Activated B cell treated with CpG ODN at 0.5 μM for 24 hours (primary cell): ENCODE measurements at regions of chr18 and their contacts with region 1.

Region 1: DNA sequence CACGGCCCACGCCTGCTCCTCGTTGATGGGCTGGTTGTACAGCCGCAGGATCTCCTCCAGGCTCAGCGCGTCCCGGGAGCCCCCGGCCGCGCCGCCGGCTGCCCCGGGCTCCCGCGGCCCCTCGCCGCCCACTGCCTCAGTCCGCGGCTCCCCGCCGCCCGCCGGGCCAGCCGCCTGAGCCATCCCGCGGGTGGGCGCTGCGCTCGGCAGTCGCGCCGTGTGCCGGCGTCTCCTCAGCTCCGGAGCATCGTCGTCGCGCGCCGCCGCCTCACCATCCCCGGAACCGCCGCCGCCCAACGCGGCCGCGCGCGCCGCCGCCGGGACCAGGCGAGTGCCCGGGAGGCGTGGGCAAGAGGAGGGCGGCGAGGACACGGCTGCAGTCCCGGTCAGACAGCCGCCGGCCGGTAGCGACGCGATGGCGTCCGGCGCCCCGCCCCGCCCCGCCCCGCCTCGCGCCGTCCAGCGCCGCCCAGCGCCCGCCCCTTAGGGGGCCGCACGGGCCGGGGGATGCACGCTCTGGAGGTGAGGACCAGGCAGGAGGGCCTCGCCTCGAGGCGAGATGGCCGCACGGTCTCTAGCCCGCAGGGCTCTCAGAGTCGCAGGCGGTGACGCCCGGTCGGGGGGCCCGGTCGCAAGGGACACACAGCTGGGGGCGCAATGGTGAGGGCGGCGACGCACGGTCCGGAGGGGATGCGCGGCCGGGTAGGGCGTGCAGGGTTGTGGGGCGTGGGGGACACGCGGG is at the start of gene SPIRE1:
- DNase-seq: peak; percentile 52
- ATAC-seq: peak; percentile 74
- H3K4me3 Mint-ChIP-seq: peak within 1 kb of the TSS; percentile 86
- H3K27ac Mint-ChIP-seq: peak within 1 kb of the TSS; percentile 69
- H3K4me1 Mint-ChIP-seq: peaks cover 10% of the 10 kb centered on the region
- H3K27me3 Mint-ChIP-seq: peaks cover 28% of the 10 kb centered on the region
- CTCF ChIP-seq: no peak
- total RNA-seq, gene SPIRE1: 2.5 and 2.9 TPM in 2 replicates

Region 2: DNA sequence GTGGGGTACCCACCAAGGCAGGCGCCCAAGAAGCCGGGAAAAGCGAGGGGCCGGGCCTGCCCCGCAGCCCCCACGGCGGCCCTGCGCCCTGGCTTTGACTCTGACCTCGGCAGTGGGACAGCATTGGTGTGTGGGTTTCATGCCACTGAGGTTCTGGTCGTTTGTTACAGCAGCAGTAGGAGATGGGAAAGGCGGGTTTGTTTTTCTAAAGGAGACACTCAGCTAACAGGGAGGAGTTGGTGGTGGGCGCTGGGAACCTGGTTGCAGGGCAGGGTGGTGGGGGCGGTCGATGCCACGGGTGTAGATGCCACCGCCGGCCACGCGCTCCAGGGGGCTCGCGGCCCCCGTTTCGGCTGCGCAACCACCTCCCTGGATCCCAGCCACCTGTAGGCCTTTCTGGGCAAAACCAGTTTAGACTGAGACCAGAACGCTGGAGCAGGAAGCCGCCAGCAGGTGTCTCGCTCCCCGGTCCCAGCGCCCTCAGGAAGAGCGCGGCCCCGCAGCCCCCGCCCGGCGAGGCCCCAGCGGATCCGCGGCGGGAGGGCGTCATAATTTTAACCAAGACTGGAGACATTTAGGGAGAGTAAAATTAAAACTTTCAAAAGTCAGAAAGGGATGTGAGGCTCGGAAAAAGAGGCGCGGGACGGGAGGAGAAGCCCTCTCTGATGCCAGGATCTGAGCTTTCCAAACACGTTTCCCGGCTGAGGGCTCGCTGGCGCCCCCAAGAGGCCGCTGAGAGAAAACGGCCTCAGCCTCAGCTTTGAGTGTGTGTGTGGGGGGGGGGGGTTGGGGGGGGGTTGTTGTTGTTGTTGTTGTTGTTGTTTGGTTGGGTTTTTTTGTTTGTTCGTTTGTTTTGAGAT is 386.2 kb before region 1 on chr18:
- CTCF ChIA-PET with region 1: no interaction called
- POLR2A ChIA-PET with region 1: no interaction called
- intact Hi-C with region 1: loop called (anchors 2 kb)
- DNase-seq: peak; percentile 50
- ATAC-seq: peak; percentile 82
- H3K4me3 Mint-ChIP-seq: peak overlapping the region; percentile 73
- H3K27ac Mint-ChIP-seq: no peak overlapping the region
- H3K4me1 Mint-ChIP-seq: peaks cover 2% of the 10 kb centered on the region
- H3K27me3 Mint-ChIP-seq: peaks cover 13% of the 10 kb centered on the region
- CTCF ChIP-seq: no peak

Region 3: GRCh38 chr18:12317664-12318333 is 340.1 kb before region 1 on chr18:
- CTCF ChIA-PET with region 1: no interaction called
- POLR2A ChIA-PET with region 1: no interaction called
- intact Hi-C with region 1: loop called (anchors 2 kb)
- DNase-seq: no peak
- ATAC-seq: peak; percentile 25
- H3K4me3 Mint-ChIP-seq: peak overlapping the region; percentile 37
- H3K27ac Mint-ChIP-seq: peak overlapping the region; percentile 61
- H3K4me1 Mint-ChIP-seq: peaks cover 72% of the 10 kb centered on the region
- H3K27me3 Mint-ChIP-seq: no peaks in the 10 kb centered on the region
- CTCF ChIP-seq: no peak

Region 4: GRCh38 chr18:12327510-12328178 is 330.2 kb before region 1 on chr18:
- CTCF ChIA-PET with region 1: interaction called, 8 read pairs
- POLR2A ChIA-PET with region 1: no interaction called
- intact Hi-C with region 1: loop called (anchors 1 kb)
- DNase-seq: peak; percentile 49
- ATAC-seq: peak; percentile 52
- H3K4me3 Mint-ChIP-seq: no peak overlapping the region
- H3K27ac Mint-ChIP-seq: no peak overlapping the region
- H3K4me1 Mint-ChIP-seq: peaks cover 13% of the 10 kb centered on the region
- H3K27me3 Mint-ChIP-seq: no peaks in the 10 kb centered on the region
- CTCF ChIP-seq: no peak

Region 5: DNA sequence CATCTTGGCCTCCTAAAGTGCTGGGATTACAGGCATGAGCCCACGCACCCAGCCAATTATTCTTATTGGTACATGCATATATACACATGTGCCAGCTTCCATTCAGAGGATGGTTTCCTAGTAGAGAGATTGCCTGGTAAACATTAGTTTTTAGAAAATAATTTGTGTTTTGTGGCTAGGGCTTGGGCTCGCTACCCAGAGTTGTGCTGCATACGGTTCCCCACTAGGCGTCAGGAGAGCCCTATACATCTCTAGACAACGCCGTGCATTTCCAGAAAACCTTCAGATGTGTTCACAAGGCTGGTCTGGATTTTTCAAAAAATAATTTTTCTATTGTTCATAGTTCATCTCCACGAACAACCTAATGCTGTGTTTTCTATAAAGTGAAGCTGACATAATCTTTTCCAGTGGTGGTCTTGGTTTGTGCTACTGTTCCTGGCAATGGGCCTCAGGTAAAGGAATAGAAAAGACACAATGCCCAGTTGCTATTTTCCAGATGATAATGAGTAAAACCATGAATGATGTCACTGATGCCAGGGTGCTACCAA is 266.2 kb before region 1 on chr18:
- CTCF ChIA-PET with region 1: interaction called, 49 read pairs
- POLR2A ChIA-PET with region 1: no interaction called
- intact Hi-C with region 1: loop called (anchors 1 kb)
- DNase-seq: no peak
- ATAC-seq: peak; percentile 98
- H3K4me3 Mint-ChIP-seq: no peak overlapping the region
- H3K27ac Mint-ChIP-seq: no peak overlapping the region
- H3K4me1 Mint-ChIP-seq: no peaks in the 10 kb centered on the region
- H3K27me3 Mint-ChIP-seq: peaks cover 13% of the 10 kb centered on the region
- CTCF ChIP-seq: no peak

Region 6: GRCh38 chr18:12408247-12408869 is 249.5 kb before region 1 on chr18:
- CTCF ChIA-PET with region 1: no interaction called
- POLR2A ChIA-PET with region 1: no interaction called
- intact Hi-C with region 1: loop called (anchors 1 kb)
- DNase-seq: no peak
- ATAC-seq: peak; percentile 8
- H3K4me3 Mint-ChIP-seq: peak overlapping the region; percentile 76
- H3K27ac Mint-ChIP-seq: peak overlapping the region; percentile 68
- H3K4me1 Mint-ChIP-seq: peaks cover 18% of the 10 kb centered on the region
- H3K27me3 Mint-ChIP-seq: peaks cover 7% of the 10 kb centered on the region
- CTCF ChIP-seq: no peak

Region 7: DNA sequence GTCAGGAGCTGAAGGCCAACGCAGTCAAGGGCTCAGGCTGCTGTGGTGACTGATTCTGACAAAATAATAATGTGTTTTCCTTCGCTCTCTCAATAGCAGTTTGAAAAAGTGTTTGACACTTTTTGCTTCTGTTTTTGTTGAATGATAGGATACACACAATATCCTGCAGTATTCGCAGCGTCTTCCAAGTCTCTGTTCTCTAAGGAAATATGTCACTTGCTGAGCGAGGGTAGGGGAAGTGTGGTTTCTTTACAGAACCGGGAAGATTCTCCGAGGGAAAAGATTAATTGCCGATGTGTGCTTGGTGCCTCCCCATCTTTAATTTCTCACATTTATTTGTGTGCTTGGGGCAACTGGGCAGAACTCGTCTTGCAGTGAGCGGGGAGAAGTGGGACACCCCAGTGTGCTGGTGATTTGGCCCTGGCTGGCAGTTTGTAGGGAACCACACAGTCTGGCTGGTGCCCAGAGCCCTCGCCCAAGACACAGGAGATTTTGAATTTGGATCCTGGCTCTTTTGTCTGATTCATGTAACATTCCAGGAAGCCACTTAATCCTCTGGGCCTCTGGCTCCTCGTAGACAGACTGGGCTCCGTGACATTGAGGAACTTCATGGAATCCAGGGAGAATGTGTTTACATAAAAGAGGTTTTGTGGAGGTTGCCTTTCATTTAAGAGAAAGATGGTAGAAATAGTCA is 730.1 kb after region 1 on chr18:
- CTCF ChIA-PET with region 1: no interaction called
- POLR2A ChIA-PET with region 1: no interaction called
- intact Hi-C with region 1: no loop called
- DNase-seq: no peak
- ATAC-seq: no peak
- H3K4me3 Mint-ChIP-seq: no peak overlapping the region
- H3K27ac Mint-ChIP-seq: no peak overlapping the region
- H3K4me1 Mint-ChIP-seq: peaks cover 1% of the 10 kb centered on the region
- H3K27me3 Mint-ChIP-seq: peaks cover 2% of the 10 kb centered on the region
- CTCF ChIP-seq: no peak